HEK293 (cell line): ENCODE measurements at regions of chr12 and their contacts with region 1.

Region 1: GRCh38 chr12:117212563-117213190 is 22.4 kb upstream of the FBXO21 start:
- H3K4me3 ChIP-seq: no peak overlapping the region
- H3K27ac ChIP-seq: no peak overlapping the region
- H3K4me1 ChIP-seq: no peaks in the 10 kb centered on the region
- CTCF ChIP-seq: peak; percentile 68

Region 2: DNA sequence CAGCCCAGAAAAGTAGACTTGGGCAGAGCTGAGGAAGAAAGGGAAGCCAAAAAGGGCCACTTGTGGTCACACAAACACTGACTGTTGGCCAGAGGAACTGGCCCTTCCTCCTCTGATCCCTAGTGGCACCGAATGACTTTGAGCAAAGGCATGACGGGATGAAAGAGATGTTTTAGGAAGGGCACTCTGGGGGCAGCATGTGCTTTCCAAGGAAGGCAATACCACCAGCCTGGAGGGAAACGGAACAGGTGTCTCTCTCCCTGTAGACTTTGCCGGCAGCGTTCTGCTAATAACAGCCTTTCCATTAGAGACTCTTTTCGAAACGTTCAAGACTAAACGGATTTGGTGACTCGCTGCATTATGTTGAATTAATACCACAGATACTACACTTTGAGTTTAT is 10.1 kb before region 1 on chr12:
- CTCF ChIA-PET with region 1: interaction called, 10 read pairs
- POLR2A ChIA-PET with region 1: no interaction called
- H3K4me3 ChIP-seq: no peak overlapping the region
- H3K27ac ChIP-seq: no peak overlapping the region
- H3K4me1 ChIP-seq: no peaks in the 10 kb centered on the region
- CTCF ChIP-seq: no peak

Region 3: DNA sequence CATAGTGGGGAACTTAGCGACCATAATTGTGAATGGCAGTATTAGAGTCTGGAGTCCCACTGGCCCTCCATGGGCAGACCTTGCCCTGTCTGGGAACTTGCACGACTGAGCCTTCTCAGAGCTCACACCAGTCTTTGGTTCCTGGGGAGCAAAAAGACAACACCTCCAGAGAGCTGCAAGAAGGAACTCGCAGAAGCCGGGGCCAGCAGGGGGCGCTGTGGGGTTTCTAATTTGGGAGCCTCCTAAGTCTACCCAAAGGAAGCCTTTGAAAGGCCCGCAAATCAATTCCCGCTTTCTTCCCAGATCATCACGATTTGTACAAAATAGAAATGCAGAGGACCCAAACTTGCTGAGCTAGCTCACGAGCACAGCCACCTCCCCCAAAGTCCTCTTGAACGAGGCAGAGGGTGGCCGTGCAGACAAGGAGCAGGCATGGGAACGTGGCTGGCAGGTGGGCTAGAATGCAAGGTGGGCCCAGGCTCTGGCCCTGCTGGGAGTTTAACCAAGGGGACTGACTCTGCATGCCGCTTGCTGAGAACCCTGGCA is 23.9 kb after region 1 on chr12:
- CTCF ChIA-PET with region 1: interaction called, 19 read pairs
- POLR2A ChIA-PET with region 1: no interaction called
- H3K4me3 ChIP-seq: no peak overlapping the region
- H3K27ac ChIP-seq: no peak overlapping the region
- H3K4me1 ChIP-seq: no peaks in the 10 kb centered on the region
- CTCF ChIP-seq: peak; percentile 31; the same call in 1 of the 2 replicates

Region 4: DNA sequence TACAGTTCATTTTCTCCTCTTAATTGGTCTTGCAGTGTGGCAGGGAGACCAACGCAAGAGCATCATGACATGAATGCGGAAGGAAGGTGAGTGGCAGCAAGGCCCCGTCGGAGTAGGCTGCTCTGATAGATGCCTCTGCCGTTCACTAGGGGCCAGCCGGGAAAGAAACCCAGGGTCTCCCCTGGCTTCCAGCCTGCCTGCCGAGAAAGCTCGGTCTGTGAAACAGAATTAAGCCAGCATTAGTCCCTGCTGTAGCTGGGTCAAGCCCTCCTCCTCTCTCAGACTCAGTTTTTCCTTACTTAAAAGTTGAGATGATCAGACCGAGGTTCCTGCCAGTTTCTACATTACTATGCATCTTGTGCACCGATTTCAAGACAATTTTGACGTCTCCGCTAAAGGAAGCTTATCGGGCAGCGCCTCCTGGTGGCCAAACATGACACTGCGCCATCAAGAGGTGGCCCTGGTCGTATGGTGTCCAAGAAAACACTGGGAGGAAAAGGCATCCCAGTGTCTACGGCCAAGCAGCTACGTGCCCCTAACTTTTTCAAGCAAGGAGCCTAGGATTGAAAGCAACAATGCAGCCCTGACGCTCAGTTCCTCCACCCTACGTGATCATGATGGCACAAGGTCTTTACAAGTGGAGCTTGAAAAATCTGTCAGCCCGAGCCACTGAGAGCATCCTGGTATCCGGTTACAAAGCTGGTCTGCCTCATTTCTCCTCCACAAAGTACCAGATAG is 624.5 kb after region 1 on chr12:
- CTCF ChIA-PET with region 1: interaction called, 22 read pairs
- POLR2A ChIA-PET with region 1: no interaction called
- H3K4me3 ChIP-seq: no peak overlapping the region
- H3K27ac ChIP-seq: no peak overlapping the region
- H3K4me1 ChIP-seq: no peaks in the 10 kb centered on the region
- CTCF ChIP-seq: peak; percentile 86

Region 5: GRCh38 chr12:117857632-117858612 is 645.2 kb after region 1 on chr12:
- CTCF ChIA-PET with region 1: interaction called, 42 read pairs
- POLR2A ChIA-PET with region 1: no interaction called
- H3K4me3 ChIP-seq: no peak overlapping the region
- H3K27ac ChIP-seq: no peak overlapping the region
- H3K4me1 ChIP-seq: no peaks in the 10 kb centered on the region
- CTCF ChIP-seq: 0 out of 2 replicates have a peak, but pooled peaks have one; percentile 27